Dendritic cell treated with granulocyte-macrophage colony-stimulating factor and Interleukin-4, amounts not matched to agents 40 ng/mL and 50 ng/mL, for 4 days (primary cell): ENCODE measurements at regions of chrX and their contacts with region 1.

Region 1: GRCh38 chrX:13734278-13735172 is at the starts of genes OFD1 and TRAPPC2:
- H3K4me3 Mint-ChIP-seq: peak within 1 kb of the TSS; percentile 95
- H3K27ac Mint-ChIP-seq: peak within 1 kb of the TSS; percentile 89
- H3K4me1 Mint-ChIP-seq: peaks cover 24% of the 10 kb centered on the region
- H3K27me3 Mint-ChIP-seq: no peaks in the 10 kb centered on the region

Region 2: GRCh38 chrX:13699183-13699826 is 35.2 kb before region 1 on chrX:
- intact Hi-C with region 1: loop called (anchors 5 kb)
- H3K4me3 Mint-ChIP-seq: no peak overlapping the region
- H3K27ac Mint-ChIP-seq: no peak overlapping the region
- H3K4me1 Mint-ChIP-seq: peaks cover 46% of the 10 kb centered on the region
- H3K27me3 Mint-ChIP-seq: no peaks in the 10 kb centered on the region